ENCODE measurements at regions of chr15 and their contacts with region 1.

Region 1: GRCh38 chr15:68875377-68876116 is 54.8 kb upstream of the SPESP1 start:
- DNase-seq: peak; percentile 81 to 99 (median 96)

Region 2: DNA sequence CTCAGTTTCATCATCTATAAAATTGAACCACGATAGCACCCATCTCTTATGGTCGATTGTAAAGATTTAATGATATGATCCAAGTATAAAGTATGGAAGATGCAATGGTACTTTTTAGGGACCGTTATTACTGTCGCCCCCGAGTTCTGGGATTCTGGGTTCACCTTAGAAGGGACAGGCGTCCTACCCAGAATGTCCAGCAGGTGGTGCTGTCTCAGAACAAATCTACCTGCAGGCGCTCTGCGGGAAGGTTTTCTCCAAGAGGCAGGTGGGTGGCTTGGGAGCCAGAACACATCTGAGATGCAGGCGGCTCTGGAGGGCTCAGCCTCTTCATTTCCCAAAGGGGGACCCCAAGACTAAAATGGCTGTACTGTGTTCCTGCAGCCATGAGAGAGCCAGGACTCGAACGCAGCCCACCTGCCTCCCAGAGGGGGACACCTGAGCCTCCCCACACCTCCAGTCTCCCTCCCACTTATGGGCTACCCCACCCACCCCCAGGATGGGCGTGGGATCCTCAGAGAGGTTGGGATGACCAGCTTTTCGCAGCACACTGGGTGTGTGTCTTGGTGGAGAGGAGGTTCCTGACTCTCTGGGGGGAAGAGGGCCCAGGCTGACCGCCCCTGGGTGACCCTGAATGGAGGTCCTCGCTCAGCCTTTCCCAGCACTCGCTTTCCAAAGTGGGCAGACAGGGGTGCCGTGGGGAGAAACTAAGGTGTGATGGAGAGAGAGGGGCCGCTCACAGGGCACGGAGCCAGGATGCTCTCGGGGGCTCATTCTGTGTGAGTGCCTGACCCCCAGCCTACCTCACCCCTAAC is 324.9 kb before region 1 on chr15:
- intact Hi-C with region 1: loop called (anchors 2 kb)
- DNase-seq: peak; percentile 59 to 96 (median 88)

Region 3: GRCh38 chr15:68730471-68730919 is 145.1 kb before region 1 on chr15:
- intact Hi-C with region 1: loop called (anchors 1 kb)
- DNase-seq: peak in 8 of 10 donors; percentile 29 to 85 (median 62)

Region 4: GRCh38 chr15:68820295-68821189 is 55.0 kb before region 1 on chr15 and contains the start of gene ANP32A:
- intact Hi-C with region 1: loop called (anchors 10 kb)
- DNase-seq: peak; percentile 92 to 99 (median 96)

Measured in posterior cingulate gyrus (tissue), 11 donors.